ENCODE measurements at regions of chr6 and their contacts with region 1.

Region 1: GRCh38 chr6:36623547-36624459 is 29.6 kb downstream of the SRSF3 start:
- DNase-seq: no peak
- H3K4me3 ChIP-seq: no peak overlapping the region
- H3K27me3 ChIP-seq: no peaks in the 10 kb centered on the region
- CTCF ChIP-seq: peak; percentile 90

Region 2: DNA sequence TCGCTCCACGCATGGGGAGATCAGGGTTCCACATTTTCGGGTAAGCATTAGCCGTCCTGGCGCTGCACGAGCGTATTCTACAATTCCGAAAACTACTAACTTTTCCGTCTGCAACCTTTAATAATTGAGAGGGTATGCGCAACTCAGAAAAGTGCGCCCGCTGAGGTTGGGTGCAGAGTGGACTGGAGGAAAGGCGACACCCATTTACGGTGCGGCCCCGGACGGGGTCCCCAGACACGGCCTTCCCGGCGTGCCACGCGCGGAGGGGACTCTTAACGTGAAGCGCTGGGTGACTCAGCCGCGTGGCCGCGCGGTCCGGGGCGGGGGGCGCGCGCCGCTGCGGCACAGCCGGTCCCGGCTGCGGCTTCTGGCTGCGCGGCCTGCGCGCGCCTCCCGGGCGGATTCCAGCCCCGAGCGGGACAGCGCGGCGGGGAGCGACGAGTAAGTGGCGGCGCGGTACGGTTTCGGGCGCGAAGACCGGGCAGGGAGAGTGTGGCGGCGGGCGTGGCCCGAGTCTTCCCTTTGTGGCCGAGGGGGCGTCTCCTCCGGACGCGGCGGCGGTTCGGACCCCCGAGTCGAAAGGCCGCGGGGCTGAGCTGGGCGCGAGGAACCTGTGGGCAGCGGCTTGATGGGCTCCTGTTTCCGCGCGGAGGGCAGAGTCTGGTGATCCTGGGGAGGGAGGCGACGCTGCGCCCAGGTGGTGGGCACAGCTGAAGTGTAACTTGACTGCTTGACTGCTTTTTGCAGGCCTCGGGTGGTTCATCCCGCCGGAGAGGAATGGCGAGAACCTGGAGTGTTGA is 180.9 kb before region 1 on chr6 and contains the starts of genes KCTD20 and PXT1:
- CTCF ChIA-PET with region 1: no interaction called
- POLR2A ChIA-PET with region 1: no interaction called
- DNase-seq: no peak
- H3K4me3 ChIP-seq: peak within 1 kb of the TSS; percentile 96
- H3K27me3 ChIP-seq: no peaks in the 10 kb centered on the region
- CTCF ChIP-seq: no peak
- polyA plus RNA-seq, gene KCTD20: 123 and 154 TPM in 2 replicates
- polyA plus RNA-seq, gene PXT1: 0.04 TPM in 1 of 2 replicates, not detected in the other

Region 3: GRCh38 chr6:36642913-36643817 is 19.4 kb after region 1 on chr6:
- CTCF ChIA-PET with region 1: interaction called, 18 read pairs
- POLR2A ChIA-PET with region 1: no interaction called
- DNase-seq: no peak
- H3K4me3 ChIP-seq: no peak overlapping the region
- H3K27me3 ChIP-seq: no peaks in the 10 kb centered on the region
- CTCF ChIP-seq: no peak

Region 4: GRCh38 chr6:36724514-36725390 is 100.9 kb after region 1 on chr6:
- CTCF ChIA-PET with region 1: interaction called, 23 read pairs
- POLR2A ChIA-PET with region 1: no interaction called
- DNase-seq: no peak
- H3K4me3 ChIP-seq: no peak overlapping the region
- H3K27me3 ChIP-seq: no peaks in the 10 kb centered on the region; the same call in none of the 2 replicates
- CTCF ChIP-seq: peak; percentile 70

Region 5: DNA sequence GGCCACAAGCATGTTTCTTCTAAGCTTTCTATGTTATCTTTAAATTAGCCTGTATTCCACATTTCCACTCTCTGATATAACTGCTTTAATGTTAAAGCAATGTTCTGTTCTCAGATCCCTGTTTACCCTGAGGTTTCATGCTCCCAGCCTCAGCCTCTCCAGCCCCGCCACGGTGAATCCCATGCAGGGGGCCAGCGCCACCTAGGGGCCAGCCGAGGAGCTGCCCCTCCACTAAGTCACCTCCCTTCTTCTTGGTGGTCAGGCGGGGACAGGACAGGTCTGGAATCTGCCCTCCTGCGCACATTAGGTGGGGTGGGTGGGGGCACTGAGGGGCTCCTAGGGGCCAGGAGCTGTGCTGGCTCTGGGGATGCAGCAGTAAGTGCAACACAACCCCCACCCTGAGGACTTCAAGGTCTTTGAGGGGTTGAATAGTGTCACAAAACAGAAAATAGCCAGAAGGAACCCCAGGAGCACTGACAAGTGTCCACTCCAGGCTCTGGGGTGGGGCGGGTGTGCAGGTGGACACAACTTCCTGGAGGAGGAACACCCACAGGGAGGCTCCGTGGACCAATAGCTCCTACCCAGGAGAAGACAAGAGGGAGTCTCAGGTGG is 135.5 kb after region 1 on chr6:
- CTCF ChIA-PET with region 1: interaction called, 27 read pairs
- POLR2A ChIA-PET with region 1: interaction called, 10 read pairs
- DNase-seq: no peak
- H3K4me3 ChIP-seq: no peak overlapping the region
- H3K27me3 ChIP-seq: peaks cover 2% of the 10 kb centered on the region
- CTCF ChIP-seq: peak; percentile 100

Region 6: DNA sequence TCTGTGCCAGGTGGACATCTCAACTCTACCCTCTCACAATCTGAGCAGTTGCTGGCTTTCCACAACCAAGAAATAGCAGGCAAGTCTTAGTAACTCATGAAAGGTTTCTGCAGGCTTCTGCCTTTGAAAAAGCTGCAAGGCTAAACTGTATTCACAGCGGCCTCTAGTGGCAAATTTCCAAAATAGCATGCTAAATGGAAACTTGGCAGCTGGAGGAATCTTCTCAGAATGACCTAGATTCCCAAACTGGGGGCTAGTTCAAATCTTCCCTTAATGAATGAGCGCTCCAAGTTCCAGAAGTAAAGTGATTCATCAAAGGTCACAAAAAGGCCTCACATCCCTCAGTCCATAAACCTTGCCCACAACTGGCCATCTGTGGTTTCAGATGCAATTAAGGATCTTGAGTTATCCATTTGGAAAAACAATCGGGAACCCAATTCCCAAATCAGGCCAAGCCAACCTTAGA is 227.4 kb after region 1 on chr6:
- CTCF ChIA-PET with region 1: no interaction called
- POLR2A ChIA-PET with region 1: no interaction called
- DNase-seq: peak; percentile 58
- H3K4me3 ChIP-seq: no peak overlapping the region
- H3K27me3 ChIP-seq: no peaks in the 10 kb centered on the region
- CTCF ChIP-seq: peak; percentile 73